ENCODE measurements at regions of chr10 and their contacts with region 1.

Region 1: GRCh38 chr10:68348265-68348741 is 15.6 kb upstream of the PBLD start:
- DNase-seq: peak in 8 of 9 donors; percentile 30 to 53 (median 44)
- ATAC-seq: peak; percentile 81
- H3K4me3 ChIP-seq: no peak overlapping the region
- H3K4me3 Mint-ChIP-seq: no peak overlapping the region
- H3K27ac ChIP-seq: peak overlapping the region; percentile 15
- H3K27ac Mint-ChIP-seq: peak overlapping the region in 8 of 9 donors; percentile 31 to 90 (median 81)
- H3K4me1 ChIP-seq: no peaks in the 10 kb centered on the region
- H3K4me1 Mint-ChIP-seq: peaks cover 0 to 13% (median 4%) of the 10 kb centered on the region in 7 donors
- H3K27me3 ChIP-seq: no peaks in the 10 kb centered on the region
- H3K27me3 Mint-ChIP-seq: no peaks in the 10 kb centered on the region

Region 2: GRCh38 chr10:68231106-68231816 is 117.0 kb before region 1 on chr10:
- CTCF ChIA-PET with region 1: no interaction called
- POLR2A ChIA-PET with region 1: no interaction called
- intact Hi-C with region 1: loop called in 1 of 2 experiments (anchors 5 kb)
- DNase-seq: peak in 7 of 9 donors; percentile 2 to 66 (median 10)
- ATAC-seq: peak; percentile 70
- H3K4me3 ChIP-seq: peak overlapping the region; percentile 59
- H3K4me3 Mint-ChIP-seq: peak overlapping the region; percentile 70 to 89 (median 83)
- H3K27ac ChIP-seq: no peak overlapping the region
- H3K27ac Mint-ChIP-seq: no peak overlapping the region
- H3K4me1 ChIP-seq: no peaks in the 10 kb centered on the region
- H3K4me1 Mint-ChIP-seq: peaks cover 0 to 13% (median 8%) of the 10 kb centered on the region in 7 donors
- H3K27me3 ChIP-seq: no peaks in the 10 kb centered on the region
- H3K27me3 Mint-ChIP-seq: peaks cover 27 to 63% (median 44%) of the 10 kb centered on the region in 5 donors